SK-N-SH (cell line): ENCODE measurements at regions of chr13 and their contacts with region 1.

Region 1: DNA sequence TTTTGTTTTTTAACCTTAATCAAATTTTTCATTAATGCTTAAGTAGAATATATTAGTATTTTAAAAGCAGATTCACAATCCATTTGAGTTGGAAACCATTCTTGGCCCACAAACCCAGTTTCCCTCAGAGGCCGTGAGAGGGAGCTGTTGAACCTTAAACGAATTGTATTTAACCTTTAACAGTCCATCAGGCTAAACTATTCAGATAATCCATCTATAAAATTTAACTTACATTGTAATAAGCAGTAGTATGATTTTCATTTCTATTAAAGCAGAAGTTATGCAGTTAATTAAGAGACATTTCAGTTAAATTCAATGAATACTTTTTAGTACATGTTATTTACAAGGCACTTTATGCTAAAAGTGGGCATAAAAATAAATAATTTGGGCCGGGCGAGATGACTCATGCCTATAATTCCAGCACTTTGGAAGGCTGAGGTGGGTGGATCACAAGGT is 123.1 kb upstream of the C1QTNF9B start:
- DNase-seq: peak; percentile 62
- H3K4me3 ChIP-seq: no peak overlapping the region; a peak in 1 of 4 replicates
- H3K27ac ChIP-seq: no peak overlapping the region
- H3K4me1 ChIP-seq: no peaks in the 10 kb centered on the region
- H3K27me3 ChIP-seq: no peaks in the 10 kb centered on the region
- CTCF ChIP-seq: peak; percentile 95
- EP300 ChIP-seq: no peak
- RAD21 ChIP-seq: peak; percentile 92

Region 2: DNA sequence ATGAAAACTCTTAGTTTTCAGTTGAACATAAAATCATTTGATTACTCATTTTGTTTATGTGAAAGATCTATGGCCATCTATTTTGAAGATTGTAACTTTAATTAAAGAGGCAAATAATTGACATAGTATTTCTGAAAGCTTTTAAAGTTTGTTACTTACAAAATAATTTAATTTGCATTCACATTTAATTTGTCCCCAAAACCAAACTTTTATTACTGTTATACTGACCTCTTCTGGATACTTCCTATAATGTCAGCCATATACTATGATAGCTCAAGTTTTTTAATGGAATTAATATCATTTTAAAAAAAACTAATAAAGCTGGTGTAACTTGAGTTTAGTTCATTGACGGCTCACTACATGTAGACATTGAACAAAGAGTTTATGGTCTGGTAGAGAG is 844.5 kb before region 1 on chr13:
- CTCF ChIA-PET with region 1: no interaction called
- POLR2A ChIA-PET with region 1: no interaction called
- DNase-seq: no peak
- H3K4me3 ChIP-seq: no peak overlapping the region
- H3K27ac ChIP-seq: no peak overlapping the region
- H3K4me1 ChIP-seq: no peaks in the 10 kb centered on the region
- H3K27me3 ChIP-seq: peaks cover 18% of the 10 kb centered on the region
- CTCF ChIP-seq: peak; percentile 68
- EP300 ChIP-seq: no peak
- RAD21 ChIP-seq: no peak

Region 3: GRCh38 chr13:23766283-23766682 is 254.1 kb before region 1 on chr13:
- CTCF ChIA-PET with region 1: no interaction called
- POLR2A ChIA-PET with region 1: no interaction called
- DNase-seq: no peak
- H3K4me3 ChIP-seq: no peak overlapping the region
- H3K27ac ChIP-seq: no peak overlapping the region
- H3K4me1 ChIP-seq: peaks cover 0 to 9% of the 10 kb centered on the region in 2 experiments; a peak in 1 of 4 replicates
- H3K27me3 ChIP-seq: no peaks in the 10 kb centered on the region
- CTCF ChIP-seq: no peak
- EP300 ChIP-seq: no peak
- RAD21 ChIP-seq: no peak

Region 4: GRCh38 chr13:24005755-24006281 is 14.6 kb before region 1 on chr13:
- CTCF ChIA-PET with region 1: interaction called, 18 read pairs
- POLR2A ChIA-PET with region 1: no interaction called
- DNase-seq: no peak
- H3K4me3 ChIP-seq: no peak overlapping the region
- H3K27ac ChIP-seq: no peak overlapping the region
- H3K4me1 ChIP-seq: peaks cover 0 to 16% of the 10 kb centered on the region in 2 experiments; a peak in 2 of 4 replicates
- H3K27me3 ChIP-seq: no peaks in the 10 kb centered on the region
- CTCF ChIP-seq: no peak
- EP300 ChIP-seq: no peak
- RAD21 ChIP-seq: no peak

Region 5: GRCh38 chr13:24038841-24039330 is 18.5 kb after region 1 on chr13:
- CTCF ChIA-PET with region 1: interaction called, 27 read pairs
- POLR2A ChIA-PET with region 1: no interaction called
- DNase-seq: no peak
- H3K4me3 ChIP-seq: no peak overlapping the region
- H3K27ac ChIP-seq: peak overlapping the region; percentile 25 to 54; a peak in 2 of 4 replicates
- H3K4me1 ChIP-seq: peaks cover 0 to 13% of the 10 kb centered on the region in 2 experiments; a peak in 1 of 4 replicates
- H3K27me3 ChIP-seq: no peaks in the 10 kb centered on the region
- CTCF ChIP-seq: no peak
- EP300 ChIP-seq: peak in 1 of 2 experiments; percentile 21; a peak in 1 of 4 replicates
- RAD21 ChIP-seq: no peak

Region 6: DNA sequence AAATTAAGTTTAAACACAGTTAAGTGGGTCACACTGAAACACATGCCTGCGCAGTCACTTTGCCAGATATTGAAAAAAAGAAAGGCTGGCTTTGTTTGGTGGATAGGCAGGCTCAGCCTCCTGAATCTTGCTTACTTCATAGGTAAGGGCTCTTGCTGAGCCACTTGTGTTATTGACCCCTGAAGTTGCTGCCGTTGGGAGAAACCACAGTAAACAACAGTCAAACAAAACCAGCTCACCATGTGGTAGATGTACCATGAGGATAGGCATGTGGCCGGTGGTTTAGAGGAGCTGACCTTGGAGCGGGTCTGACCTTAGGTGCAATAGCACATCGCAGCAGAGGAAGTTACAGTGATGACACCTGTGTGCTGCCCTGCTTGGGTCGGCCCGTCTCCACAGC is 192.3 kb after region 1 on chr13:
- CTCF ChIA-PET with region 1: interaction called, 98 read pairs
- POLR2A ChIA-PET with region 1: no interaction called
- DNase-seq: no peak
- H3K4me3 ChIP-seq: no peak overlapping the region
- H3K27ac ChIP-seq: no peak overlapping the region
- H3K4me1 ChIP-seq: peaks cover 3 to 5% of the 10 kb centered on the region in 2 experiments; a peak in 2 of 4 replicates
- H3K27me3 ChIP-seq: no peaks in the 10 kb centered on the region
- CTCF ChIP-seq: no peak
- EP300 ChIP-seq: no peak
- RAD21 ChIP-seq: no peak

Region 7: DNA sequence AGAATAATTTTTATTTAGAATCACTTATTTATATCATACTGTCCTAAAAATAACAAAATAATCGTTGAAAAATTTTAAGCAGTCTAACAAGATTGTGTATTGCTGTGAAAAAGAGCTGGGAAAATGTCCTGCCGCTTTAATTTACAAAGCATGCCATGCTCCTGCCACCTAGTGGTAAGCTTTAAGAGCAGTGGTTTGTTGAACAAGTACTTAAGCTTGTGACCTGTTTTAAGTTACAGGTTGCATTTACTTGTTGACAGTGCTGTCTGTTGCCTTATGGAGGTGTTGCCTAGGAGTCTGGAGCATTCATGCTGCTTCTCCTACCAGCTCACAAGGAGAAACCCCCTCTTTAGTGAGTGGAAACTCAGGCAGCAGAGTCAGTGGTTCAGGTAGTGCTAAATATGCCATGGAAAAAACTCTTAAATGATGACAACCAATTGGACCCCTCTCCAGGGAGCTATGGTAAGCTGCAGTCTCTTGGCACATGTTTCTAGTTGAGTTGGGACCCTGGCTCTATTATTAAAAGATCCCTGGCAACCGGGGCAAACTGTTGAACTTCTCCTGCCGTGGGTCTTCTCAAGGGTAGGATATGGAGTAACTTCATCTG is 208.6 kb after region 1 on chr13:
- CTCF ChIA-PET with region 1: interaction called, 98 read pairs
- POLR2A ChIA-PET with region 1: no interaction called
- DNase-seq: peak; percentile 53
- H3K4me3 ChIP-seq: no peak overlapping the region
- H3K27ac ChIP-seq: no peak overlapping the region
- H3K4me1 ChIP-seq: peaks cover 0 to 2% of the 10 kb centered on the region in 2 experiments; a peak in 2 of 4 replicates
- H3K27me3 ChIP-seq: no peaks in the 10 kb centered on the region
- CTCF ChIP-seq: peak; percentile 90
- EP300 ChIP-seq: no peak
- RAD21 ChIP-seq: peak; percentile 80

Region 8: GRCh38 chr13:24299488-24300114 is 279.2 kb after region 1 on chr13:
- CTCF ChIA-PET with region 1: no interaction called
- POLR2A ChIA-PET with region 1: no interaction called
- DNase-seq: no peak
- H3K4me3 ChIP-seq: no peak overlapping the region
- H3K27ac ChIP-seq: no peak overlapping the region
- H3K4me1 ChIP-seq: no peaks in the 10 kb centered on the region
- H3K27me3 ChIP-seq: no peaks in the 10 kb centered on the region
- CTCF ChIP-seq: no peak
- EP300 ChIP-seq: no peak
- RAD21 ChIP-seq: no peak

Region 9: DNA sequence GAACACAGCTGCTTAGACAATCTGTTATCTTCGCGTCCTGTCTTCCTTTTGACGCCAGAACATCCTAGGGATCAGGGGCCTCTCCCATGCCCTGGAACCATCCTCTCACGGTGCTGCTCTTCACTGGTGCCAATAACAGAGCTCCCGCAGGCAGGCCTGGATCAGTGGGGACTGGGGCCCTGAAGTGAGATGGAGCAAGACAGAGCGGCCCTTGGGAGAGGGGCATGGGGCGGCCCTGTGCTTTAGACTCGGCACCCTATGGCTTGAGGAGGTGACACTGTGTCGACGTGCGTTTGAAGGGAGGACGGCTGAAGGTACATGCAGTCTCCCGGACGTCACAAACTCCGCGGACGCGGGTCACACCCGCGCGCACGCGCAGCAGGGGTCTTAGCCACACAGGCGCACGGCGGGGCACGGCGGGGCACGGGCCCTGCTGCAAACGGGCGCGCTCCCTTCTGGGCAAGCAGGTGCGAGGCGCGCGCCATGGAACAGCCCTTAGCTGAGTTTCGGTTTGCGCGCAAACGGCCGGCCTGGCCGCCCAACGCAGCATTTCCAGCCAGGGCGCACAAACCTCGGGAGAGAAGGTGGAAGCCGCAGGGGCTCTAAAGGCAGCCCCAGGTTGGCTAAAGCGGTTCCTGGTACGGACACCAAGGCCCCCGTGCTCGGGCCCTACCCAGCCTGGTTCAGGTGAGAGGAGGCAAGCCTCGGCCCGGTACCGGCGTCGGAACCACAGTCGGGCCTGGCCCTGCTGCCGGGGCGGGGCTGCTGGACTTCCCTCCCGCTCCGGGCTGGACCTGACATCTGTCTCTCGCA is 727.1 kb after region 1 on chr13:
- CTCF ChIA-PET with region 1: no interaction called
- POLR2A ChIA-PET with region 1: no interaction called
- DNase-seq: no peak
- H3K4me3 ChIP-seq: peak overlapping the region; percentile 27 to 47; a peak in 2 of 4 replicates
- H3K27ac ChIP-seq: no peak overlapping the region
- H3K4me1 ChIP-seq: no peaks in the 10 kb centered on the region
- H3K27me3 ChIP-seq: 0 out of 2 replicates have a peak, but pooled peaks cover 10% of the 10 kb centered on the region
- CTCF ChIP-seq: no peak
- EP300 ChIP-seq: no peak
- RAD21 ChIP-seq: no peak